Heart left ventricle (tissue), 16 donors: ENCODE measurements at regions of chr2 and their contacts with region 1.

Region 1: DNA sequence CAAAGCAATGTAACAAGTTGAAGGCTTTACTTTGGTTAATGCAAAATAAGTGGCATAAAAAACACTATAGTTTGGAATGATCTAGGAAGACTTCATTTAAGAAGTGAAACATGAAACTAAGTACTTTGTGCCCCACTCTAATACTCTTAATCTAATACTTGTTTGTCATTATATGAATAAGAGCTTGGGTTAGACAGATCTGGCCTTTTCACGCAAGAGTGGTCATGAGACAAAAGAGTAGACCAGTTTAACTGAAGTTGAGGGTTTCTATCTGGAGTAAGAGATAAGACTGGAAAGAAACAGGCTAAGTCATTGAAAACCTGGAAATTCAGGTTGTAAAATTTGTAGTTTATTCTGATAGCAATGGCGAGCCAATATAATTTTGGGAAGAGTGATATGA is 2.8 kb downstream of the SLC30A6 start:
- DNase-seq: no peak
- ATAC-seq: no peak
- H3K4me3 ChIP-seq: no peak overlapping the region
- H3K27ac ChIP-seq: no peak overlapping the region
- H3K4me1 ChIP-seq: peaks cover 0 to 24% (median 17%) of the 10 kb centered on the region in 12 donors
- H3K27me3 ChIP-seq: no peaks in the 10 kb centered on the region
- CTCF ChIP-seq: no peak
- POLR2A ChIP-seq: no peak

Region 2: GRCh38 chr2:32039447-32040219 is 128.9 kb before region 1 on chr2 and contains the start of gene DPY30:
- intact Hi-C with region 1: loop called in 2 of 10 experiments (anchors 1 to 10 kb)
- DNase-seq: peak; percentile 90 to 96 (median 95)
- ATAC-seq: peak; percentile 97 to 99 (median 98)
- H3K4me3 ChIP-seq: peak within 1 kb of the TSS; percentile 65 to 98 (median 79)
- H3K27ac ChIP-seq: peak within 1 kb of the TSS; percentile 13 to 90 (median 82)
- H3K4me1 ChIP-seq: peaks cover 0 to 15% (median 9%) of the 10 kb centered on the region in 12 donors
- H3K27me3 ChIP-seq: no peaks in the 10 kb centered on the region
- CTCF ChIP-seq: peak in 3 of 12 donors; percentile 6 to 21 (median 15)
- POLR2A ChIP-seq: peak in 1 of 2 donors; percentile 89
- total RNA-seq, gene DPY30: 36.8 to 52.8 (median 41.6) TPM

Region 3: DNA sequence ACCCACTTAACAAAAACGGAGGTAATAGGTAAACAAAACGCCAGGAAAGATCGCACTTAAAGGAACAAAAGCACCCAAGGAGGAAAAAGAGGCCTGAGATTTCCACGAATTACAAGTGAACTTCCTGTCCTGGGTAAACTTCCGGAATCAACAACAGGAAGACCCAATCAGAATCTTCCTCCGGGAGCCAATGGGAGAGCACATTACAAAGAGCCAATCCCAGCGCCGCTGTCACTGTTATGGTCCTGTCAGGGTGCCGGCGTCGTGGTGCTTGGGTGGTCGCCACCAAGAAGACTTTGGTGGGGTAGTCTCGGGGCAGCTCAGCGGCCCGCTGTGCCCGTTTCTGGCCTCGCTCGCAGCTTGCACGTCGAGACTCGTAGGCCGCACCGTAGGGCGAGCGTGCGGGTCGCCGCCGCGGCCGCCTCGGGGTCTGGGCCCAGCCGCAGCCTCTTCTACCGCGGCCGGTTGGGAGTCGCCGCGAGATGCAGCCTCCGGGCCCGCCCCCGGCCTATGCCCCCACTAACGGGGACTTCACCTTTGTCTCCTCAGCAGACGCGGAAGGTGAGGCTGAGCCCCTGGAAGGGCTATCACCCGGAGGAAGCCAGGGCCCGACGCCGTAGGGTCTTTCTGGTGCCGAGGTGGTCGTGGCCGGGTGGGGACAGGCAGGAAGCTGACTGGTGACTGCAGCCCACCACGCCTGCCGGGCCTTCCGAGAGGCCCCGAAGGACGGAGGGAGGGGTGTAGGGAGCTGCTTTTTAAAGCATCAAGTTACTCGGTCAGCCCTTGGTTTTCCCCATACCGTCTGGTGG is 109.4 kb after region 1 on chr2 and contains the start of gene YIPF4:
- intact Hi-C with region 1: loop called in 2 of 10 experiments (anchors 10 kb)
- DNase-seq: peak; percentile 85 to 88 (median 87)
- ATAC-seq: peak; percentile 96 to 99 (median 99)
- H3K4me3 ChIP-seq: peak within 1 kb of the TSS; percentile 57 to 100 (median 84)
- H3K27ac ChIP-seq: peak within 1 kb of the TSS; percentile 62 to 97 (median 88)
- H3K4me1 ChIP-seq: peaks cover 0 to 39% (median 24%) of the 10 kb centered on the region in 12 donors
- H3K27me3 ChIP-seq: no peaks in the 10 kb centered on the region
- CTCF ChIP-seq: no peak
- POLR2A ChIP-seq: peak in 1 of 2 donors; percentile 75
- total RNA-seq, gene YIPF4: 14.9 to 79.3 (median 64.4) TPM

Region 4: GRCh38 chr2:32356735-32357644 is 188.5 kb after region 1 on chr2 and contains the start of gene BIRC6:
- intact Hi-C with region 1: loop called in 1 of 10 experiments (anchors 10 kb)
- DNase-seq: peak; percentile 98 to 99 (median 99)
- ATAC-seq: peak; percentile 96 to 98 (median 97)
- H3K4me3 ChIP-seq: peak within 1 kb of the TSS; percentile 73 to 100 (median 95)
- H3K27ac ChIP-seq: peak within 1 kb of the TSS; percentile 85 to 98 (median 93)
- H3K4me1 ChIP-seq: peaks cover 10 to 48% (median 29%) of the 10 kb centered on the region in 12 donors
- H3K27me3 ChIP-seq: no peaks in the 10 kb centered on the region
- CTCF ChIP-seq: no peak
- POLR2A ChIP-seq: peak; percentile 29 to 89
- total RNA-seq, gene BIRC6: 36.1 to 68.0 (median 55.8) TPM